ENCODE measurements at regions of chr17 and their contacts with region 1.

Region 1: GRCh38 chr17:43125133-43125966 is at the start of gene BRCA1:
- DNase-seq: peak; percentile 98
- ATAC-seq: peak; percentile 100
- H3K4me3 ChIP-seq: peak within 1 kb of the TSS; percentile 68 to 97 (median 92)
- H3K4me3 Mint-ChIP-seq: peak within 1 kb of the TSS; percentile 91
- H3K27ac ChIP-seq: peak within 1 kb of the TSS; percentile 60 to 82
- H3K27ac Mint-ChIP-seq: peak within 1 kb of the TSS; percentile 91
- H3K4me1 ChIP-seq: peaks cover 12 to 24% of the 10 kb centered on the region in 2 donors
- H3K4me1 Mint-ChIP-seq: peaks cover 31% of the 10 kb centered on the region
- H3K27me3 ChIP-seq: no peaks in the 10 kb centered on the region
- H3K27me3 Mint-ChIP-seq: no peaks in the 10 kb centered on the region
- CTCF ChIP-seq: no peak
- total RNA-seq, gene BRCA1: 7.2 and 9.0 TPM in 2 replicates

Region 2: DNA sequence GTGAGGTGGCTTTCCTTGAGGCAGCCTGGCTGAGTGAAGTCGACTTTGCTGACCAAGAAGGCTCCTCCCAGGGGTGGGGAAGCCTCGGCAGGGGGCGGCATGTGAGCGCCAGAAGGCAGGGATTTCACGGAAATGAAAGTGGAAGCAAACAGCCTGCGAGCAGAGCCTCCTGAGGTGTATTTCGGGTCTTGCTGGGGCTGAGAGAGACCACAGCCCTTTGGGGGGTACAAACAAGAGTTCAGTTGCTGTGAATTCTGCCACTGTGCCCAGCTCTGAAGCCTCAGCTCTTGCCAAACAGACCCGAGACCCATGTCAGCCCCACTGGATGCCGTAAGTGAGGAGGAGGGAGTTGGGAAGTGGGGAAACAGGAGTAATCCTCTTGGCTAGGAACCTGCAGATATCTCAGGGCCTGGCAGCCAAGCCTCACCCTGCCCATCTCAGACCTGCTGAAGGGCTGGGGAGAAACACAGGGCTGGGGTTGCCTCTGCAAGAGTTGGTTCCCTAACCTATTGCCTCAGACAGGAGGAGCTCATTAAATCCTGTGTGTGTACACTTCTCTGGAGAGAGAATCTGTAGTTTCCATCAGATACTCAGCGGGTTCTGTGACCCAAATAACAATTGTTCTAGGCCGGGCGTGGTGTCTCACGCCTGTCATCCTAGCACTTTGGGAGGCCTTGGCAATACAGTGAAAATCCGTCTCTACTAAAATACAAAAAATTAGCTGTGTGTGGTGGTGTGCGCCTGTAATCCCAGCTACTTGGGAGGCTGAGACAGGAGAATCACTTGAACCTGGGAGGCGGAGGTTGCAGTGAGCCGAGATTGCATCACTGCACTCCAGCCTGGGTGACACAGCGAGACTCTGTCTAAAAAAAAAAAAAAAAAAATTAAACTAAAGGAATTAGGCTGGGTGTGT is 118.5 kb before region 1 on chr17 and contains the start of gene IFI35:
- CTCF ChIA-PET with region 1: no interaction called
- POLR2A ChIA-PET with region 1: no interaction called
- intact Hi-C with region 1: loop called (anchors 2 kb)
- DNase-seq: peak; percentile 89
- ATAC-seq: peak; percentile 99
- H3K4me3 ChIP-seq: peak within 1 kb of the TSS; percentile 73 to 91 (median 82)
- H3K4me3 Mint-ChIP-seq: peak within 1 kb of the TSS; percentile 100
- H3K27ac ChIP-seq: peak within 1 kb of the TSS; percentile 83 to 93
- H3K27ac Mint-ChIP-seq: peak within 1 kb of the TSS; percentile 100
- H3K4me1 ChIP-seq: peaks cover 8 to 13% of the 10 kb centered on the region in 2 donors
- H3K4me1 Mint-ChIP-seq: peaks cover 16% of the 10 kb centered on the region
- H3K27me3 ChIP-seq: no peaks in the 10 kb centered on the region
- H3K27me3 Mint-ChIP-seq: no peaks in the 10 kb centered on the region
- CTCF ChIP-seq: peak; percentile 64
- total RNA-seq, gene IFI35: 34.7 and 37.2 TPM in 2 replicates

Region 3: DNA sequence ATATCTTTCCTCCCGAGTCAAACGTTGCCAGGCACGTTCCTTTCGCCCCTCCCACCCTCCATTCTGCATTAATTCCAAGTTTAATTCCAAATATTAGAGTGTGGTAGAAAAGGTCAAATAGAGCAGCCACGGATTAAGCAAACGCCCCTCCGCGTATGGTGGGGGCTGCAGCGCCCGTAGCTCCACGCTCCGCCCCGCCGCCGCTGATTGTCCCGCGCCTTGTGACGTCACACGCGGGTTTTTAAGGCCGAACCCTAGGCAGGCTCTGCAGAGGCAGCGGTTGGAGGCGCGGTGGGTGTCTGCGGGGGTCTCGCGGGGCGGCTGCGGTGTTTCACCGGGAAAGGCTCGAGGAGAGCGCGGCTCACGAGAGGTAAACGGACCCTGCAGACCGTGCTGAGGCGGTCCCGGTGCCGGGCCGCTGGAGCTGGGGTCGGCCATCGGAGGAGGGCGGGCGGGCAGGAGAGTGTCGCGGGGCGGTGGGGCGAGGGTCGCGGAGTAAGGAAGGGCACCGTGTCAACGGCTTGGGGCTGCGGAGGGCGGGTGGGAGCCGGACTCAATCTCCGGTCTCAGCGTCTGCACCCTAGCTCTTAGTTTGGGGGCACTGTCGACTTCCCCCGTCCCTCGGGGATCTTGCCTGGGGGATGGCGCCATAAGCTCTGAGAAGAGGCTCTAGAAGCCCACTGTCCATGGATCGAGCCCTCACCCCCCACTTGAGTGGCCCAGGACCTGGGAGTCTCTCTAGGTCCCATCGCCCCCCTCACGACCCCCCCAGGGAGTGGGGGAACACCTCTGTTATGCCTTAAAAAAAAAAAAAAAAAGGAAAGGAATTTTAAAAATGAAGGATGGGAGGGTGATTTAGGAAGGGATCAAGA is 273.6 kb after region 1 on chr17 and contains the start of gene ARL4D:
- CTCF ChIA-PET with region 1: no interaction called
- POLR2A ChIA-PET with region 1: no interaction called
- intact Hi-C with region 1: no loop called
- DNase-seq: peak; percentile 86
- ATAC-seq: peak; percentile 88
- H3K4me3 ChIP-seq: peak within 1 kb of the TSS; percentile 59 to 81 (median 77)
- H3K4me3 Mint-ChIP-seq: peak within 1 kb of the TSS; percentile 90
- H3K27ac ChIP-seq: peak within 1 kb of the TSS; percentile 55 to 68
- H3K27ac Mint-ChIP-seq: peak within 1 kb of the TSS; percentile 93
- H3K4me1 ChIP-seq: peaks cover 40 to 69% of the 10 kb centered on the region in 2 donors
- H3K4me1 Mint-ChIP-seq: peaks cover 68% of the 10 kb centered on the region
- H3K27me3 ChIP-seq: no peaks in the 10 kb centered on the region
- H3K27me3 Mint-ChIP-seq: no peaks in the 10 kb centered on the region
- CTCF ChIP-seq: no peak
- total RNA-seq, gene ARL4D: 11.3 and 11.4 TPM in 2 replicates